Dendritic cell treated with granulocyte-macrophage colony-stimulating factor and Interleukin-4, amounts not matched to agents 40 ng/mL and 50 ng/mL, for 4 days (primary cell): ENCODE measurements at regions of chr19 and their contacts with region 1.

Region 1: GRCh38 chr19:17718947-17719711 is at the start of gene MAP1S:
- H3K4me3 Mint-ChIP-seq: peak within 1 kb of the TSS; percentile 96
- H3K27ac Mint-ChIP-seq: peak within 1 kb of the TSS; percentile 83
- H3K4me1 Mint-ChIP-seq: peaks cover 77% of the 10 kb centered on the region
- H3K27me3 Mint-ChIP-seq: no peaks in the 10 kb centered on the region

Region 2: DNA sequence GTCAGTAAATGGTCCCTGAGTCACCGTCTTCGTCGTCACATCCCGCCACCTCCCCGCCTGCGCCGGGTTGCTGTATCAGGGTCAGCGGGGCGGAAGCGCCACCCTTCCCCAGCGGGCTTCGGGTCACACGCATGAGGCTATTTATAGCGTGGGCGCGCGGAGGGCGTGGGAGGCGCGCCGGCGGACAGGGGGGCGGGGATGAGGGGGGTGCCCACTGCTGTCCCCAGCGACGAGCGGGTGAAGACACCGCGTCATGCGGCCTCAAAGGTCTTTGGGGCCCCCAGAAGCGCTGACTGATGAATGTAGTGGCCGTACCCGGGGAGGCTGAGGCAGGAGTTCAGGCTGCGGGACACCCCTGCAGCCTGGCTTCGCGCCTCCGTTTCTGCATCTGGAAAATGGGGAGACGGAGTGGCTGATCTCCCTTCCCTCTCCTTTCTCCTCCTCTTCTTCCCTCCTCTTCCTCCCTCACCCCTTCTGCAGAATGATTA is 38.9 kb before region 1 on chr19:
- intact Hi-C with region 1: no loop called
- H3K4me3 Mint-ChIP-seq: peak overlapping the region; percentile 60
- H3K27ac Mint-ChIP-seq: peak overlapping the region; percentile 23
- H3K4me1 Mint-ChIP-seq: peaks cover 24% of the 10 kb centered on the region
- H3K27me3 Mint-ChIP-seq: peaks cover 72% of the 10 kb centered on the region

Region 3: GRCh38 chr19:17735410-17735809 is 16.3 kb after region 1 on chr19:
- intact Hi-C with region 1: loop called (anchors 2 kb)
- H3K4me3 Mint-ChIP-seq: peak overlapping the region; percentile 32
- H3K27ac Mint-ChIP-seq: peak overlapping the region; percentile 85
- H3K4me1 Mint-ChIP-seq: peaks cover 93% of the 10 kb centered on the region
- H3K27me3 Mint-ChIP-seq: no peaks in the 10 kb centered on the region

Region 4: DNA sequence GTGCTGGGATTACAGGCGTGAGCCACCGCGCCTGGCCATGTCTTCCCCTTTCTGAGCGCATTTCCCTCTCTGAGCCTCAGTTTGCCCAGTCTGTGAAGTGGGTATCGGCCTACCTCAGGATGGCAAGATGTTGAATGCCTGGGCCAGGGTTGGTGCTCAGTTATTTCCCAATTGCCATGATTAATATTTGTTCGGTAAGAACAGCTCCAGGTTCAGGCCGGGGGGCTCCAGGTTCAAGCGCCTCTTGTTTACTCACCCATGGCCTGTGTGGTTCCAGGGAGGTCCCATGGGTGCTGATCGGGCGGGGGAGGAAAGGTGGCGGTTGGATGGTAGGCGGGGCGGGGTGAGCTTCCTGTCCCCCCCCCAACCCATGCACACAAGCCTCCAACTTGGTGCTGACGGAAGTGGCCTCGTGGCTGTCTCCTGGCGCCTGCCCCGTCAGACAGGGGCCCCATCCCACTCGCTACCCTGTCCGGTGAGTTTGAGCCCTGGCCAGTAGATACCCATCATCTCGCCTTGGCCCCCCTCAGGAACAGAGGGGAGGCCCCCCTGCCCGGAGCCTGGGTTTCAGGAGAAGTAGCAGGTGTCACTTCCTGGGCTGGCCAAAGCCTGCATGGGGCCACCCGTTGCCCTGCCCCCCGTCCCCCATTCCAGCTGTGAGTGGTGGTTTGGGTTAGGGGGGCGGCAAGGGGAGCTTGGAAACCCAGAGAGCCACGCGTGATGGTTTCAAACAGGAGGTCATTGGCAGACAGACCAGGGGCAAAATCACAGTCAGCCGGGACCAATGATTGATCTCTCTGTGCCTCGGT is 32.2 kb after region 1 on chr19 and contains the start of gene FCHO1:
- intact Hi-C with region 1: loop called (anchors 5 kb)
- H3K4me3 Mint-ChIP-seq: peak within 1 kb of the TSS; percentile 89
- H3K27ac Mint-ChIP-seq: peak within 1 kb of the TSS; percentile 92
- H3K4me1 Mint-ChIP-seq: peaks cover 81% of the 10 kb centered on the region
- H3K27me3 Mint-ChIP-seq: no peaks in the 10 kb centered on the region

Region 5: GRCh38 chr19:17766543-17767131 is 47.5 kb after region 1 on chr19:
- intact Hi-C with region 1: loop called (anchors 5 kb)
- H3K4me3 Mint-ChIP-seq: peak overlapping the region; percentile 26
- H3K27ac Mint-ChIP-seq: peak overlapping the region; percentile 85
- H3K4me1 Mint-ChIP-seq: peaks cover 31% of the 10 kb centered on the region
- H3K27me3 Mint-ChIP-seq: no peaks in the 10 kb centered on the region